ENCODE measurements at regions of chr15 and their contacts with region 1.

Region 1: GRCh38 chr15:82197733-82198594 is 64.6 kb downstream of the EFL1 start:
- DNase-seq: peak; percentile 49 to 89 (median 74)
- H3K4me3 ChIP-seq: no peak overlapping the region
- H3K27ac ChIP-seq: peak overlapping the region in 3 of 59 donors; percentile 6 to 35 (median 34)
- H3K27me3 ChIP-seq: no peaks in the 10 kb centered on the region
- CTCF ChIP-seq: peak; percentile 64 to 96 (median 88)

Region 2: GRCh38 chr15:81410318-81410753 is 787.6 kb before region 1 on chr15:
- intact Hi-C with region 1: loop called in 1 of 2 experiments (anchors 5 kb)
- DNase-seq: peak in 9 of 10 donors; percentile 5 to 77 (median 49)
- H3K4me3 ChIP-seq: peak overlapping the region in 1 of 59 donors; percentile 17
- H3K27ac ChIP-seq: peak overlapping the region in 18 of 59 donors; percentile 0 to 76 (median 39)
- H3K27me3 ChIP-seq: no peaks in the 10 kb centered on the region
- CTCF ChIP-seq: peak; percentile 27 to 81 (median 68)

Region 3: GRCh38 chr15:81480645-81481053 is 717.3 kb before region 1 on chr15:
- intact Hi-C with region 1: loop called in 1 of 2 experiments (anchors 5 kb)
- DNase-seq: peak in 2 of 10 donors; percentile 32 to 48
- H3K4me3 ChIP-seq: peak overlapping the region in 21 of 59 donors; percentile 11 to 53 (median 27)
- H3K27ac ChIP-seq: peak overlapping the region in 1 of 59 donors; percentile 46
- H3K27me3 ChIP-seq: no peaks in the 10 kb centered on the region
- CTCF ChIP-seq: peak; percentile 81 to 100 (median 93)

Region 4: DNA sequence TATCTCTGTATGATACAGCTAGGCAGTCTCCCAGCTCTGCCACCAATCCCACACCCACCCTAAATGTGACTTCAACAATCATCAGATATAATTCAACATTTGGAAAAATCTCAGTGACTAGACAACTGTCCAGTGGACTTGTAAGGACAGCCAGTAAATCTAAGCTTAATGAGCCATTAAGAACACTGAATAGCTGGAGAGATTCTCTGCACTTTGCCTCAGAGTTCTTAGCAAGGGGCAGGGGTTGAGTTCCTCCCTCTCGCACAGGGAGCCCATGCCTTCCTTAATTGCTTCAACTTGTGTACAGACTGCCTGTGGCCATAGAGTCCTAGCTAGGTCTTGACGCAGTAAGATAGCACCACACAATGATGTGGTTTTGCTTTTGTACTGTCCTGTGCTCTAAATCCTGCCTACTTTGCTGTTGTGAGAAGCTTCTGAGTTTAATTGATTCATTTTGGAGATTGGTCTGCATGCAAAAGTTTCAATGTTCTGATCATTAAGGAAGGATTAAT is 167.7 kb before region 1 on chr15:
- intact Hi-C with region 1: no loop called
- DNase-seq: no peak
- H3K4me3 ChIP-seq: no peak overlapping the region
- H3K27ac ChIP-seq: no peak overlapping the region
- H3K27me3 ChIP-seq: no peaks in the 10 kb centered on the region
- CTCF ChIP-seq: no peak

Region 5: GRCh38 chr15:82139823-82140268 is 58.1 kb before region 1 on chr15:
- intact Hi-C with region 1: loop called in 1 of 2 experiments (anchors 2 kb)
- DNase-seq: no peak
- H3K4me3 ChIP-seq: peak overlapping the region in 18 of 59 donors; percentile 4 to 44 (median 28)
- H3K27ac ChIP-seq: no peak overlapping the region
- H3K27me3 ChIP-seq: no peaks in the 10 kb centered on the region
- CTCF ChIP-seq: peak; percentile 59 to 94 (median 78)